ENCODE measurements at regions of chr12 and their contacts with region 1.

Region 1: GRCh38 chr12:56189176-56189917 is at the start of gene SMARCC2:
- DNase-seq: peak; percentile 71 to 95 (median 80)
- ATAC-seq: peak; percentile 77
- H3K4me3 ChIP-seq: peak within 1 kb of the TSS; percentile 96
- H3K4me3 Mint-ChIP-seq: peak within 1 kb of the TSS; percentile 99
- H3K27ac ChIP-seq: peak within 1 kb of the TSS; percentile 87 to 93
- H3K27ac Mint-ChIP-seq: peak within 1 kb of the TSS; percentile 99
- H3K4me1 ChIP-seq: peaks cover 33% of the 10 kb centered on the region
- H3K4me1 Mint-ChIP-seq: peaks cover 46% of the 10 kb centered on the region
- H3K27me3 ChIP-seq: no peaks in the 10 kb centered on the region
- H3K27me3 Mint-ChIP-seq: peaks cover 5% of the 10 kb centered on the region
- CTCF ChIP-seq: peak; percentile 64
- total RNA-seq, gene SMARCC2: 104 to 109 TPM

Region 2: GRCh38 chr12:56041552-56042429 is 147.6 kb before region 1 on chr12 and contains the start of gene RPS26:
- CTCF ChIA-PET with region 1: interaction called, 18 read pairs
- POLR2A ChIA-PET with region 1: interaction called, 4 read pairs
- intact Hi-C with region 1: loop called (anchors 2 kb)
- DNase-seq: peak; percentile 81 to 99 (median 89)
- ATAC-seq: peak; percentile 92
- H3K4me3 ChIP-seq: peak within 1 kb of the TSS; percentile 95
- H3K4me3 Mint-ChIP-seq: peak within 1 kb of the TSS; percentile 94
- H3K27ac ChIP-seq: peak within 1 kb of the TSS; percentile 88 to 90
- H3K27ac Mint-ChIP-seq: peak within 1 kb of the TSS; percentile 86
- H3K4me1 ChIP-seq: peaks cover 32% of the 10 kb centered on the region
- H3K4me1 Mint-ChIP-seq: peaks cover 51% of the 10 kb centered on the region
- H3K27me3 ChIP-seq: no peaks in the 10 kb centered on the region
- H3K27me3 Mint-ChIP-seq: no peaks in the 10 kb centered on the region
- CTCF ChIP-seq: peak; percentile 43
- total RNA-seq, gene RPS26: 118 to 126 TPM

Region 3: GRCh38 chr12:56137853-56138571 is 51.3 kb before region 1 on chr12:
- CTCF ChIA-PET with region 1: interaction called, 13 read pairs
- POLR2A ChIA-PET with region 1: interaction called, 17 read pairs
- intact Hi-C with region 1: no loop called
- DNase-seq: no peak
- ATAC-seq: peak; percentile 55
- H3K4me3 ChIP-seq: no peak overlapping the region
- H3K4me3 Mint-ChIP-seq: peak overlapping the region; percentile 39
- H3K27ac ChIP-seq: peak overlapping the region; percentile 34 to 60
- H3K27ac Mint-ChIP-seq: peak overlapping the region; percentile 78
- H3K4me1 ChIP-seq: peaks cover 78% of the 10 kb centered on the region
- H3K4me1 Mint-ChIP-seq: peaks cover 67% of the 10 kb centered on the region
- H3K27me3 ChIP-seq: no peaks in the 10 kb centered on the region
- H3K27me3 Mint-ChIP-seq: no peaks in the 10 kb centered on the region
- CTCF ChIP-seq: no peak

Region 4: DNA sequence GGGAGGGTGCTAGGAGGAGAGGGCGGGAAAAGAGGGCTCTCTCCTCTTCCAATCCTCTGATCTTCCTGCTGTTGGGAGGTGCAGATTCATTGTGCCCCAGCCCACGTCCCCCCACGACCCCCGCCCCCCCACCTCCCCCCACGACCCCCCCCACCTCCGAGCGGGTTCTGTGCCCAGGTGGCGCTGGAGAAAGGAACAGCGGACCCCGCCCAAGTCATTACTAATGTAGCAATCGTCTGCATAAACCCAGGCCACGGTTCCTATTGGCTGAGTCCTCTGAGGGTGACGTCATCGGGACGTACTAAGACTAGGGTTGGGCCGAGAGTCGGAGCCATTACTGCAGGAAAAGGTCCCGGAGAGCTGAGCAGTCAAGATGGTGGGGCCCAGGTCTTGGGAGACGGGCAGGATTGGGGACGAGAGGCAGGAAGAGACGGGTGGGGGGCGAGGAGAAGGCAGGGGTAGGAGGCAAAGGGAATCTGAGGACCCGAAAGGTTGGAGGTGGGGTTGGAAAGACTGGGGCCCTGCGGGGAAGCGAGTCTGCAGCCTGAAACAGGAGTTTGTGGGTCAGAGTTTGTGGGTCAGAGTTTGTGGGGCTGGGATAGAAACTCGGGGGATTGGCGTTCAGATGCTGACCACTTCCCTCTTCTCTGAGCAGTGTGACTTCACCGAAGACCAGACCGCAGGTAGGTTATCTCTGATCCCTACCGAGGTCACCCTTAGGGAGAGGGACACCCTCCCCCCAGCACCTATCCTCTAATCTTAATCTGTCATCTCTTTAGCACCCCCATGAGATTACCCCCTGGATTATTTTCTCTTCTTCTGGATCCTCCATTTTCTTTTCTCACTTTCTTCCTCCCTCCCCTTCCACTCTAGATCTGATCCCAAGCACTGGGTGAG is 31.1 kb before region 1 on chr12 and contains the start of gene MYL6:
- CTCF ChIA-PET with region 1: interaction called, 42 read pairs
- POLR2A ChIA-PET with region 1: interaction called, 65 read pairs
- intact Hi-C with region 1: loop called (anchors 2 kb)
- DNase-seq: peak; percentile 77 to 98 (median 86)
- ATAC-seq: peak; percentile 80
- H3K4me3 ChIP-seq: peak within 1 kb of the TSS; percentile 78
- H3K4me3 Mint-ChIP-seq: peak within 1 kb of the TSS; percentile 96
- H3K27ac ChIP-seq: peak within 1 kb of the TSS; percentile 84 to 92
- H3K27ac Mint-ChIP-seq: peak within 1 kb of the TSS; percentile 92
- H3K4me1 ChIP-seq: peaks cover 52% of the 10 kb centered on the region
- H3K4me1 Mint-ChIP-seq: peaks cover 40% of the 10 kb centered on the region
- H3K27me3 ChIP-seq: no peaks in the 10 kb centered on the region
- H3K27me3 Mint-ChIP-seq: no peaks in the 10 kb centered on the region
- CTCF ChIP-seq: peak; percentile 6
- total RNA-seq, gene MYL6: 670 to 673 TPM

Region 5: DNA sequence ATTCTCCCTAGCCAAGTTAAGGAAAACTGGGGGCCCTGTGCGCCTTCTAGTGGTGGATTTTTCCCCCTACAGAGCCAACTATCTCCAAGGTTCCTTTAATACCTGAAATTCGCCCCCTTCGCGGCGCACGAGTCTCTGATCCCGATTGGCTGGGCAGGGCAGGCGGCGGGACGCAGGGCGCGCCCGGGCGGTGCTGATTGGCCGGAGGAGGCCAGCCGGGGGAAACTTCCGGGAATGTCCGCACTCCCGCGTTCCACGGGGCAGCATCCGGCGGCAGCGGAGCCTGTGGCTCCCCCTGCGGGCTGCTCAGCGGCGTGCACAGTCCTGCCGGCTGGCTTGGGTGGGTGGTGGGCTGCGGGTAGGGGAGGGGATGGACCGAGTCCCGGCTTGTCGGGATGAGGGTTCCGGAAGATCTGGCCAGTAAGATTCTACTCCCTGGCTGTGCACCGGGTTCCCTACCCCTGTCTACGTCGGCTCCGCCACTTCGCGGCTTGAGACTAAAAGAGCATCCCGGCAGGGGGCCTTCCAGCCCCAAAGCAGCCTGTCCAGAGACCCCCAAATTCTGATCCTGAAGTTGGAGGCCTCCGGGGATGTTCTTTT is 34.9 kb after region 1 on chr12 and contains the start of gene NABP2:
- CTCF ChIA-PET with region 1: interaction called, 31 read pairs
- POLR2A ChIA-PET with region 1: interaction called, 57 read pairs
- intact Hi-C with region 1: loop called (anchors 1 kb)
- DNase-seq: peak; percentile 73 to 96 (median 88)
- ATAC-seq: peak; percentile 66
- H3K4me3 ChIP-seq: peak within 1 kb of the TSS; percentile 70
- H3K4me3 Mint-ChIP-seq: peak within 1 kb of the TSS; percentile 98
- H3K27ac ChIP-seq: peak within 1 kb of the TSS; percentile 60 to 81
- H3K27ac Mint-ChIP-seq: peak within 1 kb of the TSS; percentile 100
- H3K4me1 ChIP-seq: peaks cover 56% of the 10 kb centered on the region
- H3K4me1 Mint-ChIP-seq: peaks cover 48% of the 10 kb centered on the region
- H3K27me3 ChIP-seq: no peaks in the 10 kb centered on the region
- H3K27me3 Mint-ChIP-seq: no peaks in the 10 kb centered on the region
- CTCF ChIP-seq: peak; percentile 88
- total RNA-seq, gene NABP2: 7.6 to 9.1 TPM

Region 6: DNA sequence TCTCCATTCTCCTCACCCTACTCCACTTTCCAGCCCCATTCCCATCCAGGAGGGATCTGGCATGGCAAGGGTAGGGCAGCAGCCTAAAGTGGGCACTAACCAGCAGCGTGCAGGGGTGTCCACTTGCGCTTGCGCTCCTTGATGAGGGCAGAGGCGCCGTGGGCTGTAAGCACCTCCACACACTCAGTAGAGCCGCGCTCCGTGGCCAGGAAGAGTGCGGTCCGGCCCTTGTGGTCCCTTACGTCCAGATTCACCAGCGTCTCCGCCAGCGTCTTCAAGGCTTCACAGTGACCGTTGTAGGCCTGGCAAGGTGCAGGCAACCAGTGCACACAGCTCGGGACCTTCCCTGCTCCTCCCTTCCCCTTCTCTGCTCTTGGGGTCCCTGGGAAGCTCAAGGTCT is 58.6 kb after region 1 on chr12:
- CTCF ChIA-PET with region 1: no interaction called
- POLR2A ChIA-PET with region 1: no interaction called
- intact Hi-C with region 1: no loop called
- DNase-seq: no peak
- ATAC-seq: no peak
- H3K4me3 ChIP-seq: no peak overlapping the region
- H3K4me3 Mint-ChIP-seq: no peak overlapping the region
- H3K27ac ChIP-seq: no peak overlapping the region
- H3K27ac Mint-ChIP-seq: no peak overlapping the region
- H3K4me1 ChIP-seq: no peaks in the 10 kb centered on the region
- H3K4me1 Mint-ChIP-seq: no peaks in the 10 kb centered on the region
- H3K27me3 ChIP-seq: no peaks in the 10 kb centered on the region
- H3K27me3 Mint-ChIP-seq: no peaks in the 10 kb centered on the region
- CTCF ChIP-seq: no peak

Region 7: GRCh38 chr12:56437430-56438176 is 248.3 kb after region 1 on chr12:
- CTCF ChIA-PET with region 1: no interaction called
- POLR2A ChIA-PET with region 1: no interaction called
- intact Hi-C with region 1: no loop called
- DNase-seq: no peak
- ATAC-seq: no peak
- H3K4me3 ChIP-seq: no peak overlapping the region
- H3K4me3 Mint-ChIP-seq: no peak overlapping the region
- H3K27ac ChIP-seq: no peak overlapping the region
- H3K27ac Mint-ChIP-seq: no peak overlapping the region
- H3K4me1 ChIP-seq: no peaks in the 10 kb centered on the region
- H3K4me1 Mint-ChIP-seq: no peaks in the 10 kb centered on the region
- H3K27me3 ChIP-seq: no peaks in the 10 kb centered on the region
- H3K27me3 Mint-ChIP-seq: no peaks in the 10 kb centered on the region
- CTCF ChIP-seq: no peak

Region 8: DNA sequence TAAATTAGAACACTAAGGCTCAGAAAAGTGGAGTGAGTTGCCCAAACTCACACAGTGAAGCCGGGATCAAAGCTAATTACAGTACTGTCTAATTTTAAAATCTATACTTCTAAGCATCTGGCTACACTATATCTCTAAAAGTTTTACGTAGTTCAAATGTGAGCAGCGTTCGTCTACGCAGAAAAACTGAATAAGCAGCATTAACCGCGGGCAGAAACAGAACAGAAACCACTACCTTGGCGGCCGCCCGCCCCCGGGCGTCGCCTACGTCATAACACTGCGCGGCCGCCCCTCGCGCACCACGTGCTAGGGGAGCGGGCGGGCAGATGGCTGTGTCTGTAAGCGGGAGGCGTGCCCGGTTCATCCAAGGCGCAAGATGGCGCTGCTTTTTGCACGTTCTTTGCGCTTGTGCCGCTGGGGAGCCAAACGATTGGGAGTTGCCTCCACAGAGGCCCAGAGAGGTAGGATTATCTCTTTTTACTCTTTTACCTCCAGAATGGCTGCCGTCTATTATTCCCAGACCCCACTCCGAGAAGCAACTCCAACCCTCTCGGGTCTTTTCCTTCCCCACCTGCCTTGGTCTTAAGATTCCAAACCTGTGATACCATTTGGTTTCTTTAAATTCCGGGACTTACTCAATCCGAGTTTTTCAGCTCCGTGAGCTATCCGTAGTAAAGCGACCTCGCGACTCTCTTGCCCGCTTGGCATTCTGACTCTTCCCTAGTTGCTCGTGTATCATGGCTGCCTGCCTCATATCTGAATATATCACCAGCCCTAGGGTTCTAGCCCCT is 279.1 kb after region 1 on chr12 and contains the start of gene SPRYD4:
- CTCF ChIA-PET with region 1: interaction called, 6 read pairs
- POLR2A ChIA-PET with region 1: interaction called, 11 read pairs
- intact Hi-C with region 1: loop called (anchors 1 to 2 kb)
- DNase-seq: peak; percentile 88 to 98 (median 93)
- ATAC-seq: peak; percentile 90
- H3K4me3 ChIP-seq: peak within 1 kb of the TSS; percentile 87
- H3K4me3 Mint-ChIP-seq: peak within 1 kb of the TSS; percentile 96
- H3K27ac ChIP-seq: peak within 1 kb of the TSS; percentile 68 to 94
- H3K27ac Mint-ChIP-seq: peak within 1 kb of the TSS; percentile 97
- H3K4me1 ChIP-seq: peaks cover 29% of the 10 kb centered on the region
- H3K4me1 Mint-ChIP-seq: peaks cover 31% of the 10 kb centered on the region
- H3K27me3 ChIP-seq: no peaks in the 10 kb centered on the region
- H3K27me3 Mint-ChIP-seq: no peaks in the 10 kb centered on the region
- CTCF ChIP-seq: peak; percentile 34
- total RNA-seq, gene SPRYD4: 7.4 to 7.9 TPM